Gastrocnemius medialis (tissue), 4 donors: ENCODE measurements at regions of chr16 and their contacts with region 1.

Region 1: GRCh38 chr16:50024684-50025536 is at the start of gene CNEP1R1:
- DNase-seq: peak; percentile 93 to 95
- ATAC-seq: peak; percentile 100
- H3K4me3 ChIP-seq: peak within 1 kb of the TSS; percentile 91 to 98 (median 98)
- H3K27ac ChIP-seq: peak within 1 kb of the TSS; percentile 84 to 92 (median 88)
- H3K4me1 ChIP-seq: peaks cover 10 to 12% of the 10 kb centered on the region in 2 donors
- H3K27me3 ChIP-seq: no peaks in the 10 kb centered on the region
- CTCF ChIP-seq: peak; percentile 99 to 100 (median 100)
- POLR2A ChIP-seq: peak; percentile 43 to 55
- total RNA-seq, gene CNEP1R1: 11.7 to 24.9 (median 16.1) TPM

Region 2: DNA sequence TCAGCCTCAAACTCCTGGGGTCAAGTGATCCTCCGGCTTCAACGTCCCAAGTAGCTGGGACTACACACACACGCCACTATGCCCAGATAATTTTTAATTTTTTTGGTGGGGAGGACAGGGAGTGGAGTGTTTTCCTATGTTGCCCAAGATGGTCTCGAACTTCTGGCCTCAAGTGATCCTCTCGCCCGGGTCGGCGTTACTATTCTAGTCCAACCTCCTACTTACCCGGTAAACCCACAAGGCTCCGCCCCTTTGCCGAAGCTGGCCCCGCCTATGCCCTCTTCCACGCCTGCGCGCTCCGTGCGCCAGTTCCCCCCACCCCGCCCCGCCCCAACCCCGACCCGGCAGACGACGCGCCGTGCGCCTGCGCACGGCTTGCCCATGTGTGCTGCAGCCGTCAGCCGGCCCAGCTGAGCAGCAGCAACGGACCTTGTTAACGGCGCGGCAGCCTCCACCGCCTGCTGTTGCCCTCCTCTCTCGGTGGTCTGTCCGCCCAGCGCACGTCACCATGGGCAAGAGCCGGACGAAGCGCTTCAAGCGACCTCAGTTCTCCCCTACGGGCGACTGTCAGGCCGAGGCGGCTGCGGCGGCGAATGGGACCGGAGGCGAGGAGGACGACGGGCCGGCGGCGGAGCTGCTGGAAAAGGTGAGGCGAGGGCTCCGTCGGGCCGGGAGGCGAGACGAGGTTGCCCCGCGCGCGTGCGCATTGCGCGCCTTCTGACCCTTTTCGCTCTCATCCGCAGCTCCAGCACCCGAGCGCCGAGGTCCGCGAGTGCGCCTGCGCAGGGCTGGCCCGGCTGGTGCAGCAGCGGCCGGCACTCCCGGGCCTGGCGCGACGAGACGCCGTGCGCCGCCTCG is 40.9 kb after region 1 on chr16 and contains the start of gene HEATR3:
- in situ Hi-C with region 1: no loop called
- intact Hi-C with region 1: loop called (anchors 1 kb)
- DNase-seq: peak; percentile 79 to 89
- ATAC-seq: peak; percentile 97 to 98
- H3K4me3 ChIP-seq: peak within 1 kb of the TSS; percentile 85 to 99 (median 85)
- H3K27ac ChIP-seq: peak within 1 kb of the TSS; percentile 91 to 99 (median 94)
- H3K4me1 ChIP-seq: peaks cover 19 to 27% of the 10 kb centered on the region in 2 donors
- H3K27me3 ChIP-seq: no peaks in the 10 kb centered on the region
- CTCF ChIP-seq: no peak
- POLR2A ChIP-seq: peak; percentile 56 to 61
- total RNA-seq, gene HEATR3: 13.1 to 25.8 (median 14.2) TPM

Region 3: GRCh38 chr16:50093607-50094539 is 69.0 kb after region 1 on chr16:
- in situ Hi-C with region 1: no loop called
- intact Hi-C with region 1: no loop called
- DNase-seq: peak; percentile 22 to 64
- ATAC-seq: peak; percentile 47 to 71
- H3K4me3 ChIP-seq: no peak overlapping the region
- H3K27ac ChIP-seq: peak overlapping the region; percentile 48 to 55 (median 51)
- H3K4me1 ChIP-seq: no peaks in the 10 kb centered on the region
- H3K27me3 ChIP-seq: no peaks in the 10 kb centered on the region
- CTCF ChIP-seq: no peak
- POLR2A ChIP-seq: no peak

Region 4: DNA sequence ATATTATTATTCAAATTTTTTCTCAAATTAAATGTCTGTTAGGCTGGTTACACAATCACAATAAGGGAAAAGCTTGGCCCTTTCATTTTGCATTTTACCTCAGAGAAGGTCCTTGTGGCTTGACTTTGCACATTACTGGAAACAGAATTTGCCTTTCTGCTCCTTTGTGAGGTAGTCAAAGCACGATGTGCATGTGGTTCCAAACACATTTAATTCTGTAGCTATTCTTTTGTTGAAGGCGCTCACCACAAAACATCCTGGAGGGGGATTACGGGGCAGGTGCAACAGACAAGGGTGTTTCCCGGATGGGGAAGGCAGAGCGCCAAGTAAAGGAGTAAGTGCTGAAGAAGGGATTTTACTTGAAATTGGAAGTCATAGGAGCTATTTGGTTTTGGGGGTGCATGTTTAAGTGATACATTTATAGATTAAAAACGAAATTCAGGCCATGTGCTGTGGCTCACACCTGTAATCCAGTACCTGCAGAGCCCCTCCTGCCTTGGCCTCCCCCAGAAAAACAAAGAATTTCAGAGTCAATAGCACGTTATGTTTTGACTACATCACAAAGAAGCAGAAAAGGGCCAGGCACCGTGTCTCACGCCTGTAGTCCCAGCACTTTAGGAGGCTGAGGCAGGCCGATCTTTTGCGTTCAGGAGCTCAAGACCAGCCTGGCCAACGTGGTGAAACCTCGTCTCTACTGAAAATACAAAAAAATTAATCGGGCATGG is 97.0 kb after region 1 on chr16:
- in situ Hi-C with region 1: no loop called
- intact Hi-C with region 1: no loop called
- DNase-seq: no peak
- ATAC-seq: no peak
- H3K4me3 ChIP-seq: no peak overlapping the region
- H3K27ac ChIP-seq: no peak overlapping the region
- H3K4me1 ChIP-seq: no peaks in the 10 kb centered on the region
- H3K27me3 ChIP-seq: no peaks in the 10 kb centered on the region
- CTCF ChIP-seq: no peak
- POLR2A ChIP-seq: no peak

Region 5: DNA sequence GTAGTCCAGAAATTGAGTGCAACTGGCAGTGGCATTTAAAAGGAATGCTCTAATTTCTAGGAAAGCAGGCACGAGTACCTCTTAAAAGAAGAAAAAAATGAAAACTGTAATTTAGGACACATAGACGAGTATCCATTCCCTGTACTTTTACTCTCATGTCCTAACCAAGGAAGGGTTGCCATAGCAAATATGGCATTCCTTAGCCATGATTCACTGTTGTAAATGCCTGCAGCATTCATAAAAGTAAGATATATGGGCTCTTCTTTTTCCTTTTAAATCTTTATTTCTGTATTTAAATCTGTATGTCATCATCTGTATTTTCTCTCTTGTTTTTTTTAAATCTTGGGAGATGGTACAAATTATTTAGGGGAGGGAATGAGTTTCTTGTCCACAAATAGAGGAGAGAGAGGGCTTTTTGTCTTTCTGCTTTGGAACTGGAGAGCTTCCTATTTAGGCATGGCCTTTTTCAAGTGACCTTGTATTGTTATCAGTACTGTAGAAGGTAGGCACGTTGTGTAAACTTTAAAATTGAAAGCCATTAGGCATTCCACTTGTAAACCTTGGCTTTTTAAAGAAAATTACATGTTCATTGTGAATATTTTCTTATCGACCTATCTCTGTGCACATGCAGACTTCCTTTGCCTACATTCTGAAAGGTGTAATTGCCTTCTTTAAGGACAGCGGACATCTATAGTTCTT is 178.2 kb after region 1 on chr16:
- in situ Hi-C with region 1: loop called in 3 of 4 experiments (anchors 5 to 10 kb)
- intact Hi-C with region 1: no loop called
- DNase-seq: no peak
- ATAC-seq: no peak
- H3K4me3 ChIP-seq: no peak overlapping the region
- H3K27ac ChIP-seq: peak overlapping the region in 1 of 4 donors; percentile 14
- H3K4me1 ChIP-seq: peaks cover 55 to 58% of the 10 kb centered on the region in 2 donors
- H3K27me3 ChIP-seq: no peaks in the 10 kb centered on the region
- CTCF ChIP-seq: no peak
- POLR2A ChIP-seq: no peak

Region 6: DNA sequence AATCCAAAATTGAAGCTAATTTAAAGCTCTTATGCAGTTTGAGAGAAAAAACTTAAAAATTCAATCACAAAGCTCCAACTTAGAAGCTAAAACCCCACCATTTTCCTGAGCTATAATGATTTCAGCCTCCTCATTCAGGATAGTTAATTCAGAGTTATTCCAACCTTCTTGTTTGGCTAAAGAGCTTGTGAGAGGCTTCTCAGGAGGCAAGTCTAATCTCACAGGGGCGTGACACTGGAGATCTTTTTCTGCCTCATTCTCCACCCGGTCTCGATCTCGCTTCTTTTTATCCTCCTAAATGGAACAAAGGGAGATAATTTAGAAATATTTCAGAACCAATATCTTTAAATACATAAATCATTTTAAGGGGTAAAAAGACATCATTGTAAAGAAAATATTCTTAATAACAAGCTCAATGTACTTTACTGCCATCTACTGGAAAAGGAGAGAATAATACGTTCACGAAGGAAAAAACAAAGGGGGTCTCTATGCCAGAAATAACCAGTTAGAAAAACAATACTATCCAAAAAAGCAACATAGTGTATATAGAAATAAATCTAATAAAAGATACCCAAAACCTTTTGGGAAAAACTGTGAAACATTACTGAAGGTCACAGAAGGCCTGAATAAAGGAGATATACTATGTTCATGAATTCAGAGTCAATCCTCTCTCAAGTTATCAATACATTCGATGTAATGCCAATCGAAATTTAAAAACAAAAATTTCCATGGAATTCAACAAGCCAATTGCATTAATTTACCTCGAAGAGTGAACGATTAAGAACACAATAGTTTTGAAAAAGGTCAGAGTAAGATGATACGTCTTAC is 329.9 kb after region 1 on chr16:
- in situ Hi-C with region 1: loop called in 3 of 4 experiments (anchors 10 to 25 kb)
- intact Hi-C with region 1: loop called (anchors 5 kb)
- DNase-seq: no peak
- ATAC-seq: no peak
- H3K4me3 ChIP-seq: no peak overlapping the region
- H3K27ac ChIP-seq: no peak overlapping the region
- H3K4me1 ChIP-seq: peaks cover 2 to 3% of the 10 kb centered on the region in 2 donors
- H3K27me3 ChIP-seq: no peaks in the 10 kb centered on the region
- CTCF ChIP-seq: peak in 4 of 5 experiments; percentile 35 to 67 (median 42)
- POLR2A ChIP-seq: no peak

Region 7: DNA sequence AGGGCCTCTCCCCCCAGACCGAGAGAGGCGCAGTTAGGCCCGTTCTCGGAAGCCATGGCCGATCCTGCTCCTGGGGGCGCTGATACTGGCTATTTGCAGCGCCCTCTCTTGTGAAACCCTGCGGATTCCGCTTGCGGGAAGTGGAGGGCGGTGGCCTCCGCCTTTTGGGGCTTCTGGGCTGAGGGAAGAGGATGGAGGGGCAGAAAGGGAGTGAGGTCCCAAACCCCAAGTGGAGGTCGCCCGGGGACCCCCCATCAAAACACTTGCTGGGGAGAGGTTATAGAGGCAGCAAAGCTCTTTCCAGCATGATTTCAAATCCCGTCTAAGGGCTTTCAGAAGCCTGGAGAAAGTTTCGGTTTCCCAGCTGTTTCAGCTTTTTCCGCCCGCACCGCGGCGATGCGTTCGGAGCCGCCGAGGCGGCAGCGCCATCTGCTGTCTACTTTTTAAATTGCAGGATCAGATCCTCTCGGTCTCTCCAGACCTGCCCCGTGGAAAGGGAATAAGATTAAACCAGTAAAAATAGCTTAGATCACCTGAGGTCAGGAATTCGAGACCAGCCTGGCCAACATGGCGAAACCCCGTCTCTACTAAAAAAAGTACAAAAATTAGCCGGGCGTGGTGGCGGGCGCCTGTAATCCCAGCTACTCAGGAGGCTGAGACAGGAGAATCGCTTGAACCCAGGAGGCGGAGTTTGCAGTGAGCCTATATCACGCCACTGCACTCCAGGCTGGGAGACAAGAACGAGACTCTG is 640.4 kb after region 1 on chr16:
- in situ Hi-C with region 1: loop called in 2 of 4 experiments (anchors 10 kb)
- intact Hi-C with region 1: loop called (anchors 2 kb)
- DNase-seq: peak; percentile 47 to 55
- ATAC-seq: peak; percentile 64 to 75
- H3K4me3 ChIP-seq: peak overlapping the region; percentile 55 to 63 (median 56)
- H3K27ac ChIP-seq: peak overlapping the region in 3 of 4 donors; percentile 40 to 64 (median 55)
- H3K4me1 ChIP-seq: peaks cover 16 to 21% of the 10 kb centered on the region in 2 donors
- H3K27me3 ChIP-seq: no peaks in the 10 kb centered on the region
- CTCF ChIP-seq: peak; percentile 70 to 95 (median 81)
- POLR2A ChIP-seq: no peak

Region 8: DNA sequence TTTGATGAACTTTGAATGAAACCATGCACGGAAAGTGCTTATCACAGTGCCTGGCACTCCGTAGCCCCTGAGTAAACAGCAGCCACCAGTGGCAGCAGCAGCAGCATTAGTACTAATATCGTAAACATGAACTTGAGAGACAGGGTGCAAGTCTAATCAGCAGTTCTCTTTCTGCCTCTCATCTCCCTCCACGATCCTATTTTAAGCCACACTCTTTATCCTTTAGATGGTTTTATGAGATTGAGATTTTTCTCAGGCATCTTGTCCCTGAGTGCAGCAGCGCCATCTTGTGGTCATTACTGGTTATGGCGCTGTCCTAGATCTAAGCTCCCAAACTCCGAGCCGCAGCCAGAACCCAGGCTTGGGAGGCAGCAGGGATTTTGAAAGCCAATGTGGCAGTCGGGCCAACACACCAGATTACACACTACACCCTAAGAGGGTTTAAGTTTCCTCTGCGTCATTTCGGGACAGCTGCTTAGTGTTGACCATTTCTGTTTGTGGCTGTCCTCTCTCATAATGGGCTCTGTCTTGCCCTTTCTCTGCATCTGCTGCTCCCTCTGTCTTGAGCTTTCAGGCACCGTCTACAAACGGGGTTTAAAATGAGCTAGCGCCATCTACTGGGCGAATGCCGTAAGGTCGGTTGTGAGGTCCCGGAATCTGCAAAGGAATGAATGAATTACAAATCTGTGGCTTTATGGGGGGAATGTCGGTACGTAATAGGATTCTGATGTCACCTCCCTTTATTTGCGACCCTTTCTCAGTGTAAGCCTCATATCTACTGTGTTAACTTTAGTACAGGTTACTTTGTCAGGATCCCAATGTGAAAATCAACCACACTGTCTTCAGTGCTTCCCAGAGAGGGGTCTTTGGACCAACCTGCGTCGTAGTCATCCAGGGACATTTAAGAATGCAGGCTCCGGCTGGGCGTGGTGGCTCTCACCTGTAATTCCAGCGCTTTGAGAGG is 781.5 kb after region 1 on chr16:
- in situ Hi-C with region 1: no loop called
- intact Hi-C with region 1: loop called (anchors 1 kb)
- DNase-seq: peak; percentile 67 to 82
- ATAC-seq: peak; percentile 96 to 98
- H3K4me3 ChIP-seq: peak overlapping the region; percentile 17 to 60 (median 28)
- H3K27ac ChIP-seq: peak overlapping the region; percentile 54 to 81 (median 64)
- H3K4me1 ChIP-seq: peaks cover 3 to 4% of the 10 kb centered on the region in 2 donors
- H3K27me3 ChIP-seq: no peaks in the 10 kb centered on the region
- CTCF ChIP-seq: peak; percentile 87 to 94 (median 92)
- POLR2A ChIP-seq: no peak